Head of caudate nucleus (tissue), 42 donors: ENCODE measurements at regions of chr1 and their contacts with region 1.

Region 1: DNA sequence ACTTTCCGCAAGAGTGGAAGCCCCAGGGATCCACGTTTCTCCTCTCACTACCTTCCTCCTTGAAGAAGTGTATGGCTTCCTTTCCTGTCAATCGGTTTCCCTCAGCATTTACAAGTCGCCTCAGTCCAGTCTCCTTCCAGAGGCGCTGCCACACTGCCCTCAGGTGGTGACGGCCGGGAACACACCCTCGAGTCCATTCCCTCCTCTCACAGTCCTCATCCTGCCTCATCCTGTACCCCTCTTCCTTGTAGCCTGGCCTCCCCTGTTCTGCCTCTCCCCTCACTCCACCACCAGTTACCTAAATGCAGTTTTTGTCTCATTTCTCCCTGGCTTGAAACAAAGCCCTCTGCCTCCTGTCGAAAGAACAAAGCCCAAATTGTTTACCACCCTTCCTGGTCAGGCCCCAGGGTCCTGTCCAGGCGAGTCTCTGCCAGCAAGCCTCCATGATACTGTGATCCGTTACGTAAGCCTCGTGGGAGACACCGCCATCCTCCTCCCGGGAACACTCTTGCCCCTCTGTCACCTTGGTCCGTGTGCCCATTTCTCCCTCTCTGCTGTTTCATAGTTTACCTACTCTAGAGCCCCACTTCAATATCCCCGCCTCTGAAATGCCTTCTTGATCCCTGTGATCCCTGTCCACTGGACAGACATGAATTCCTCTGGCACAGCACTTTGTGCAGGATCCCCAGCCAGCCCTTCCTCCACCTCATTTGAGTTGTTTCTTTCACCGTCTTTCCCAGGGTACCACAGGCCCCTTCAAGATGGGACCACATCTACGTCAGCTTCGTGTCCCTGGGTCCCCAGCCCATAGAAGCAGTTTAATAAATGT is 23.3 kb upstream of the LSM10 start:
- DNase-seq: peak; percentile 66 to 97 (median 91)

Region 2: GRCh38 chr1:36342481-36343478 is 78.3 kb before region 1 on chr1:
- intact Hi-C with region 1: loop called (anchors 10 kb)
- DNase-seq: peak in 39 of 42 donors; percentile 23 to 83 (median 57)